ENCODE measurements at regions of chr5 and their contacts with region 1.

Region 1: DNA sequence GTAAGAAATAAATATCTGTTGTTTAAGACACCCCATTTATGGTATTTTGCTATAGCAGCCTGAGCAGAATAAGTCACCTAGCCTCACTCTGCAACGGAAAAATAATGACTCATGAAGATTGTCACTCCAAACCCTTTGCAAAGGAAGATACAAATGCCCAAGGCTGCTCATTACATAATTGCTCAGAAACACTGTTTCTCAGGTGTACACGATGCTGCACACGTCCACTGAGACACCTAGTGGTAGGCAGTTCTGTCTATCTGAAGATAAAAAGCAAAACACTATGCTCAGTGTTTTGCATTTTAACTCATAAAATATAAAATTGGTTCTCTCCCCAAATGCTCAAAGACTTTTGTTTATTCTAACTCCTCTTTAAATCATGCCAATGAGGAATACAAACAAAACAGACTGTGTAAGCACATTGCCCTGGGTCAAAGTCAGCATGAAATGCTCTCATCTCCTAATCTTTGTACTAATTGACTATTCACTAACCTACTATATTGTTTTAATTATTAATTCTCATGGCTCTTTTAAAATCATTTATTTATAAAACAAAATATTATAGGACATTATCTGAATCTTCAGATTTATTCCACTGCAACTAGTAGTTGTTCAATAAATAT is 7.7 kb upstream of the TSLP start:
- DNase-seq: no peak
- H3K4me3 ChIP-seq: no peak overlapping the region
- H3K27ac ChIP-seq: no peak overlapping the region
- H3K4me1 ChIP-seq: no peaks in the 10 kb centered on the region
- H3K27me3 ChIP-seq: peaks cover 41% of the 10 kb centered on the region
- CTCF ChIP-seq: peak; percentile 63

Region 2: DNA sequence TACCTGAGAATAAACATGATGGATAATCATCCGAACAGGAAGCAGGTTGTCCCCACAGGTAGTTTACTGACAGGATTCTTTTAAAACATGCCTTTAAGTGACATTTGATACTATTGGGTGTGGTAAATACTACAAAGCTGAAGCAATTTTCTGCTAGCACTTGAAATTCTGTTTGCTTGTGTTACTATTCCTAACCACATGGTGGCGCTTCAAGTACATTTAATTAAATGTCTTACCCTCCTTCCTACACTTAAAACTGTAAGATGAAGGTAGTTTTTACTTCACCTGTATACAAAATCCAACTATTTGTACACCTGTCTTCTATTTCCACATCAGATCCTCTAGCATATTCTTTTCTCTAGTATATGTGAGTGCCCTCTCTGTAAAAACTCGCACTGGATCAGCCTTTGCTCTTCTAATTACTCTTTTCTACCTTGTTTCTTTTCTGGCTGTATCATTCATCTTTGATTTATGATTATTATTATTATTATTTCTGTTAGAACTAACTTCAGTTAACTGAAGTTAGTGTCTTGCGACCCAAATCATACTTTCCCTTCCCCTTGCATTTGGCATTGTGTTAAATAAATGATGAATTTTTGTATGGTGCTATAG is 306.6 kb before region 1 on chr5:
- intact Hi-C with region 1: loop called (anchors 10 kb)
- DNase-seq: no peak
- H3K4me3 ChIP-seq: no peak overlapping the region
- H3K27ac ChIP-seq: no peak overlapping the region
- H3K4me1 ChIP-seq: no peaks in the 10 kb centered on the region
- H3K27me3 ChIP-seq: no peaks in the 10 kb centered on the region
- CTCF ChIP-seq: peak; percentile 82

Region 3: GRCh38 chr5:110817437-110817836 is 246.4 kb before region 1 on chr5:
- intact Hi-C with region 1: no loop called
- DNase-seq: no peak
- H3K4me3 ChIP-seq: no peak overlapping the region
- H3K27ac ChIP-seq: no peak overlapping the region
- H3K4me1 ChIP-seq: no peaks in the 10 kb centered on the region
- H3K27me3 ChIP-seq: no peaks in the 10 kb centered on the region
- CTCF ChIP-seq: no peak

Measured in left ventricle myocardium inferior (tissue), 1 donor.